PC-9 (cell line): ENCODE measurements at regions of chr13 and their contacts with region 1.

Region 1: GRCh38 chr13:70623239-70623638 is 515.0 kb upstream of the KLHL1 start:
- DNase-seq: no peak
- H3K4me3 ChIP-seq: no peak overlapping the region
- H3K27ac ChIP-seq: no peak overlapping the region
- H3K4me1 ChIP-seq: no peaks in the 10 kb centered on the region
- H3K27me3 ChIP-seq: no peaks in the 10 kb centered on the region
- CTCF ChIP-seq: peak; percentile 68

Region 2: GRCh38 chr13:70634893-70635292 is 11.7 kb after region 1 on chr13:
- CTCF ChIA-PET with region 1: no interaction called
- POLR2A ChIA-PET with region 1: no interaction called
- intact Hi-C with region 1: no loop called
- DNase-seq: no peak
- H3K4me3 ChIP-seq: no peak overlapping the region
- H3K27ac ChIP-seq: no peak overlapping the region
- H3K4me1 ChIP-seq: no peaks in the 10 kb centered on the region
- H3K27me3 ChIP-seq: no peaks in the 10 kb centered on the region
- CTCF ChIP-seq: no peak

Region 3: DNA sequence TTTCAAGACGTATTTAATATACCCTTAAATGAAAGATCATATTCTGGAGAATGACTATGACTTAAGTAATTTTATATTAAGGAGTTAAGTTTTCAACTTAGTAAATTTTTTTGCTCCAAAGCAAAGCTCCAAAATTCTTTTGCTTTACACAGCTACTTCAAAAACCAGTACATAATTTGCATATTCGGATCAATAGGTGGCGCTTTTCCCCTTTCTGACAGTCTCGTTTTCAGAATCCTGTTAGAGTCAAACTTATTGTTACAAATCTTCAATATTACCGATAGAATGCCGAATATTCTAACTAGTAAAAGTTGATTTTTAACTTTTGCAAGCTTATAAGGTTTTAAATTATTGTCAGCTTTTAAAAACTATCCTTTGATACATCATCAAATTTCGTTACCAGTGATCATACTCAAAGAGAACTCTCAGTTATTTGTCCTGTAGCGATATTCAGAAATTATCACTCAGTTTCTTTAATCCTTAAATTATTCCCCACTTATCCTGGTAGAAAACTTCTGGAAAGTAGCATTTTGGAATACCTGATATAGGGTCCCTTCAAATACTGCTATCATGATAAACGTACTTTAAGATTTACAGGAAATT is 337.7 kb after region 1 on chr13:
- CTCF ChIA-PET with region 1: no interaction called
- POLR2A ChIA-PET with region 1: no interaction called
- intact Hi-C with region 1: loop called (anchors 2 kb)
- DNase-seq: peak in 1 of 2 experiments; percentile 3
- H3K4me3 ChIP-seq: no peak overlapping the region
- H3K27ac ChIP-seq: no peak overlapping the region
- H3K4me1 ChIP-seq: no peaks in the 10 kb centered on the region
- H3K27me3 ChIP-seq: no peaks in the 10 kb centered on the region
- CTCF ChIP-seq: peak; percentile 68

Region 4: DNA sequence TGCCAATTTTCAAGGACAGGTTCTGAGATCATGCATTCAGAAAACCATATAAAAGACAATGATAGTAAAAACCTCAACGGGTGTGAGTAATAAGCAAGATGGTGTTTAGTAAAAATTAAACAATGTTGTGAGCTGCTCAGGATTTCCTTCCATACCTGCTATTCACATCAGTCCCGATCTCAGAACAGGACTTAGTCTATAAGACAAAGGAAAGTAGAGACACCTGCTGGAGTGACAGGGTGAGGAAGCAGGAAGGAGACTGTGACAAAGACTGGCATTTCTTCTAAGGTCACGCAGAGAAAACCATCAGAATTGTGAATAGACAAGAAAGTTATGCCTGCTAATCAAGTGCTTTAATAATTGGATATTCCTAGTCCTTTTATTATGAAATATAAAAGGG is 595.7 kb after region 1 on chr13:
- CTCF ChIA-PET with region 1: no interaction called
- POLR2A ChIA-PET with region 1: no interaction called
- intact Hi-C with region 1: loop called (anchors 2 kb)
- DNase-seq: no peak
- H3K4me3 ChIP-seq: no peak overlapping the region
- H3K27ac ChIP-seq: no peak overlapping the region
- H3K4me1 ChIP-seq: no peaks in the 10 kb centered on the region
- H3K27me3 ChIP-seq: no peaks in the 10 kb centered on the region
- CTCF ChIP-seq: no peak; the same call in 1 of the 2 replicates

Region 5: DNA sequence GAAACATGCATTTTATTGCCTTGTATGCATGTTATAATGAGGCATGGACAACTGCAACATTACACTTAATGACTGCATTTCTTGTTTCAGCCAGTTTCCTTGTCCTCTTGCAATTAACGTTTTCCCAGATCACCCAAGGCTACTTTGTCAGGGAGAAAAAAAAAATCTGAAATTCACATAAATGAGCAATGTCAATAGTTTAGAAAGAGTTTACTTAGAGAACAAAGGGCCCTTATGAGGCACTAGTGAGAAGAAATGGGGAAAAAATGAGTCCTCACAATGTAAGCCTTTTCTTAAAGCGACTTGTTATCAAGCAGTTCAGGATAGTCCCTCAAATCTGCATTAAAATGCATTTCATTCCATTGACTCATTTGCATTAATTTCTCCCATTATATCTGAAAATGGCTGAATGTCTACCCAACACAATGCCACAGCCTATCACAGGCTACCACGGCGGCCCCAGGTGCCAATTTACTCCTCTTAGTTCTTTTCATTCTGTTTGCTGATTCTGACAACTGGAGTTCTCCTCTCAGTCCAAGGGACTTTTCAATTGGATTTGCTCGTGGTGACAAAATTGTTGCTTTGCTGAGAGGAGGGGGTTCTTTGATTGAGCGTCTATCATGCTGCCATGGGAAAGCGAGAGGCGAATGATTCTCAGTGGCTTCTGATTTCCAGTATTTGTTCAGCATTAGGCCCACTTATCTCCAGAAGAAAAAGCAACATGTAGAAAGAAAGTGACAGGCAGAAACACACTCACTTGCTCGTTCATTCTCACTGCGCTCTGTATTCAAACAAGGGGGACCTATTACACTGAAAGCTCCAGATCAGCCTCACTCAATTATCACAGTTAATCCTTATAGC is 1136.6 kb after region 1 on chr13:
- CTCF ChIA-PET with region 1: no interaction called
- POLR2A ChIA-PET with region 1: no interaction called
- intact Hi-C with region 1: loop called (anchors 5 kb)
- DNase-seq: no peak
- H3K4me3 ChIP-seq: no peak overlapping the region
- H3K27ac ChIP-seq: no peak overlapping the region
- H3K4me1 ChIP-seq: no peaks in the 10 kb centered on the region
- H3K27me3 ChIP-seq: no peaks in the 10 kb centered on the region
- CTCF ChIP-seq: no peak